ENCODE measurements at regions of chr1 and their contacts with region 1.

Region 1: GRCh38 chr1:182084487-182085316 is 23.2 kb upstream of the ZNF648 start:
- DNase-seq: peak; percentile 94
- H3K4me3 ChIP-seq: no peak overlapping the region
- H3K27ac ChIP-seq: peak overlapping the region; percentile 80 to 83
- H3K4me1 ChIP-seq: peaks cover 16% of the 10 kb centered on the region
- H3K27me3 ChIP-seq: no peaks in the 10 kb centered on the region
- CTCF ChIP-seq: peak; percentile 72 to 95 (median 94)
- POLR2A ChIP-seq: no peak

Region 2: DNA sequence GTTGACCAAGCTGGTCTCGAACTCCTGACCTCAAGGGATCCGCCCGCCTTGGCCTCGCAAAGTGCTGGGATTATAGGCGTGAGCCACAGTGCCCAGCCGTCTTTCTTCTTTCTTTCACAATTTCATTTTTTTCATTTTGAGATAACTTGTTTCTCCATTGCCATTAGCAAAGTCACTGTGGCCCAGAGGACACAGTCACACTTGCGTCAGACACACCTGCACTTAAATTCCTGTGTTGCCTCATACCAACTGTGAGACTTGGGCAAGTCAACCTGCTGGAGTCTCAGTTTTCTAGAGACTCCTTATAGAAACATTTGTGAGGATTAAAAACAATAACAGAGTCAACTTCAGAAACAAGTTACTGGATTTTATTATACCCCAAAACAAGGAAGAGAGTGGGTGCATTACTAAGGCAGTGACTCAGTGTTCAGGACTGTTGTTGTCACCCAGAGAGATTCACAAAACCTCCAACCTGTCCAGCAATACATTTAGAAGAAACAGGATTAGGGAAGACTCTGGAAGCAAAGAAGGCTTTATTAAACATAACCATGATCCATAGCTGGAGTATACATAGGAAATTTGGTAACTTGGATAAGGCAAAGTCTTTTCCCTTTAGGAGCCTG is 313.2 kb after region 1 on chr1:
- intact Hi-C with region 1: loop called (anchors 5 kb)
- DNase-seq: no peak
- H3K4me3 ChIP-seq: no peak overlapping the region
- H3K27ac ChIP-seq: no peak overlapping the region
- H3K4me1 ChIP-seq: peaks cover 38% of the 10 kb centered on the region
- H3K27me3 ChIP-seq: no peaks in the 10 kb centered on the region
- CTCF ChIP-seq: no peak
- POLR2A ChIP-seq: no peak

Region 3: DNA sequence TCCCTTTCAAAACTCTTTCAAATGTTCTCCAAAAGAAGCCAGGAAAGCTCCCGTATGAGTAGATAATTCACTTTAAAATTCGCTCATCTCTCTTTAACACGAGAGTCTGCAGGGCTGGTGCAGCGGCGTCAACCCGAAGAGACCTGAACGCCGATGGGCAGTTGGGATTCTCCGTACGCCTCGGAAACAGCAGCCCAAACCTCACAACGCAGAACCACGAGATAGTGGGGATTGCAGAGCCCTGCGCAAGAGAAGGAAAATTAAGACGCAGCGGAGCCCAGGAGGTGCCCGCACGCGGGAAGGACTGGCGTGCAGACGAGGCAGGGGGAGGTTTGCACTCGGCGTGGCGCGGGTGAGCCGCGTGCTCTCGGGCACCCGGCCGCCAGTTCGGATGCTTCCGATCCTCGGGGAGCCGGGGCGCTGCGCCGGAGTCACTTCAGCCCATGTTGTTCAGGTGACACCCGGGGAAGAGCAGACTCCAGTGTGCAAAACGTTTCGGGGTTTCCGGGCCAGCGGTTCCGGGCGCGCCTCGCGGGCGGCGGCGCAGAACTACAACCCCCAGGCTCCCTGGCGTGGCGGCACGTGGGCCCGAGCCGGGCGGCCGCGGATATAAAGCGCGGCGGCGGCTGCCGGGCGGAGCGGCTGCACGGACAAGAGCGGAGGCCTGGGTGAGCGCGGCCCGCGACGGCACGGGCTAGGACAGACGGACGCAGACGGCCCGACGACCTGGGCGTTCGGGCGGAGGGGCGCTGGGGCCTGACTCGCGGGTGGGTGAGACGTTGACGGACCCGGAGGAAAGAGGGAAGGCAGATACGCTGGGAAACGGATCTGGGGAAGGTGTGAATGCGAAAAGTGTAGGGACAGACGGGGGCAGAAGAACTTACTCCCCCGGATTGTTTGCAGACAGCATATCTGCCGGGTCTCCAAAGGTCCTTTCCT is 704.7 kb after region 1 on chr1 and contains the start of gene NPL:
- intact Hi-C with region 1: loop called (anchors 10 kb)
- DNase-seq: peak; percentile 85
- H3K4me3 ChIP-seq: peak within 1 kb of the TSS; percentile 58 to 82
- H3K27ac ChIP-seq: peak within 1 kb of the TSS; percentile 58 to 75
- H3K4me1 ChIP-seq: no peaks in the 10 kb centered on the region
- H3K27me3 ChIP-seq: no peaks in the 10 kb centered on the region
- CTCF ChIP-seq: peak in 1 of 3 experiments; percentile 4
- POLR2A ChIP-seq: peak; percentile 44
- total RNA-seq, gene NPL: 11.1 to 21.6 TPM